ENCODE measurements at regions of chr16 and their contacts with region 1.

Region 1: GRCh38 chr16:30747799-30748634 is at the start of gene PHKG2:
- DNase-seq: peak; percentile 99
- ATAC-seq: peak; percentile 97
- H3K4me3 ChIP-seq: peak within 1 kb of the TSS; percentile 73 to 89 (median 82)
- H3K27ac ChIP-seq: peak within 1 kb of the TSS; percentile 77
- H3K4me1 ChIP-seq: peaks cover 51% of the 10 kb centered on the region
- H3K27me3 ChIP-seq: no peaks in the 10 kb centered on the region
- CTCF ChIP-seq: no peak
- EP300 ChIP-seq: peak; percentile 28 to 35; a peak in 3 of 4 replicates
- POLR2A ChIP-seq: peak; percentile 92 to 96
- RAD21 ChIP-seq: peak; percentile 22; the same call in 1 of the 2 replicates
- total RNA-seq, gene PHKG2: 33.9 and 37.4 TPM in 2 replicates

Region 2: GRCh38 chr16:30065143-30065850 is 682.7 kb before region 1 on chr16 and contains the start of gene ALDOA:
- CTCF ChIA-PET with region 1: no interaction called
- POLR2A ChIA-PET with region 1: no interaction called
- in situ Hi-C with region 1: no loop called
- intact Hi-C with region 1: loop called (anchors 5 kb)
- DNase-seq: peak; percentile 96
- ATAC-seq: peak; percentile 89
- H3K4me3 ChIP-seq: peak within 1 kb of the TSS; percentile 92 to 100 (median 95)
- H3K27ac ChIP-seq: peak within 1 kb of the TSS; percentile 95
- H3K4me1 ChIP-seq: peaks cover 46% of the 10 kb centered on the region
- H3K27me3 ChIP-seq: peaks cover 0 to 2% of the 10 kb centered on the region in 2 experiments; a peak in 1 of 5 replicates
- CTCF ChIP-seq: peak; percentile 19
- EP300 ChIP-seq: peak; percentile 3 to 87; a peak in 3 of 4 replicates
- POLR2A ChIP-seq: peak in 1 of 2 experiments; percentile 96; a peak in 2 of 4 replicates
- RAD21 ChIP-seq: peak; percentile 62; the same call in 1 of the 2 replicates
- total RNA-seq, gene ALDOA: 925 and 999 TPM in 2 replicates

Region 3: GRCh38 chr16:30698139-30698815 is 49.7 kb before region 1 on chr16:
- CTCF ChIA-PET with region 1: no interaction called
- POLR2A ChIA-PET with region 1: interaction called, 10 read pairs
- in situ Hi-C with region 1: no loop called
- intact Hi-C with region 1: loop called (anchors 5 kb)
- DNase-seq: peak; percentile 97
- ATAC-seq: peak; percentile 77
- H3K4me3 ChIP-seq: peak overlapping the region; percentile 75 to 96 (median 93)
- H3K27ac ChIP-seq: peak overlapping the region; percentile 99
- H3K4me1 ChIP-seq: peaks cover 33% of the 10 kb centered on the region
- H3K27me3 ChIP-seq: no peaks in the 10 kb centered on the region
- CTCF ChIP-seq: peak; percentile 48
- EP300 ChIP-seq: 0 out of 4 replicates have a peak, but pooled peaks have one; percentile 20 to 32
- POLR2A ChIP-seq: peak; percentile 94 to 97
- RAD21 ChIP-seq: peak; percentile 74

Region 4: DNA sequence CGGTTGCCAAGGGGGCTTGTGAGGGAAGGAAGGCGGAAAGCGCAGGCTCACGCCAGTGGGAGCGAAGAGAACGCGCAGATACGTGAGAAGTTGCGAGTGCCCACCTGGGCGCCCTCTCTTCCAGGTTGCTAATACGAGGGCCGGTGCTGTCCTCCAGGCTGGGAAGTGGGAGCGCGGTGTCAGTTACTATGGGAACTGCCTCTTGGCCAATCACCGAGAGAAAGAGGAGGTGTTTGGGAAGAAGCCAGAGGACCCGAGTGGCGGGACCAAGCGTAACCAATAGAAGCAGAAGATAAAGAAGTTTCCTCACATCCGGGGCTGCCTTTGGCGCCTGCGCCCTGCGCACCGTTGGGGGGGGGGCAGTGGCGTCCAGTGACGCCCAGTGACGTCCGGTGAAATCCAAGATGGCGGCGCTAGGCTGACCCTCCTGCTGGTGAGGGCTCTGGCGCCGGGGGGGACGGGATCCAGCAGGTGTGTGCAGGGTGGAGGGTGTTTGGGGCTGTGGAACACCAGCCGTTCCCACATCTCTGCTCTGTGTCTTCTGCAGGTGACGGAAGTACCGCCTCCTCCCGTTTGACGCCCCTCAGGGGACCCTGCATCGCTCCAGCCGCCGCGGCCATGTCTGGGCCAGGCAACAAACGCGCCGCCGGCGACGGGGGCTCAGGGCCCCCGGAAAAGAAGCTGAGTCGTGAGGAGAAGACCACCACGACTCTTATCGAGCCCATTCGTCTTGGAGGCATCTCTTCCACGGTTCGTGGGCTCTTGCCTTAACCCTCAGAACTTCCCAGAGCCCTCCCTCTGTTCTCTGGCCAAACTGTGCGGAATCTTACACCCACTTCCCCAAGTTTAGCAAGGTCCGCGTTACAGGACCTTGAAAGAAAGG is 14.2 kb after region 1 on chr16 and contains the starts of genes CFAP119 and RNF40:
- CTCF ChIA-PET with region 1: no interaction called
- POLR2A ChIA-PET with region 1: interaction called, 15 read pairs
- in situ Hi-C with region 1: no loop called
- intact Hi-C with region 1: loop called (anchors 1 kb)
- DNase-seq: peak; percentile 99
- ATAC-seq: peak; percentile 93
- H3K4me3 ChIP-seq: peak within 1 kb of the TSS; percentile 80 to 91 (median 86)
- H3K27ac ChIP-seq: peak within 1 kb of the TSS; percentile 66
- H3K4me1 ChIP-seq: peaks cover 29% of the 10 kb centered on the region
- H3K27me3 ChIP-seq: no peaks in the 10 kb centered on the region; a peak in 1 of 5 replicates
- CTCF ChIP-seq: no peak
- EP300 ChIP-seq: no peak; a peak in 1 of 4 replicates
- POLR2A ChIP-seq: peak; percentile 76 to 88
- RAD21 ChIP-seq: peak; percentile 24; the same call in 1 of the 2 replicates
- total RNA-seq, gene CFAP119: 1.2 and 6.4 TPM in 2 replicates
- total RNA-seq, gene RNF40: 85.6 and 102 TPM in 2 replicates

Region 5: DNA sequence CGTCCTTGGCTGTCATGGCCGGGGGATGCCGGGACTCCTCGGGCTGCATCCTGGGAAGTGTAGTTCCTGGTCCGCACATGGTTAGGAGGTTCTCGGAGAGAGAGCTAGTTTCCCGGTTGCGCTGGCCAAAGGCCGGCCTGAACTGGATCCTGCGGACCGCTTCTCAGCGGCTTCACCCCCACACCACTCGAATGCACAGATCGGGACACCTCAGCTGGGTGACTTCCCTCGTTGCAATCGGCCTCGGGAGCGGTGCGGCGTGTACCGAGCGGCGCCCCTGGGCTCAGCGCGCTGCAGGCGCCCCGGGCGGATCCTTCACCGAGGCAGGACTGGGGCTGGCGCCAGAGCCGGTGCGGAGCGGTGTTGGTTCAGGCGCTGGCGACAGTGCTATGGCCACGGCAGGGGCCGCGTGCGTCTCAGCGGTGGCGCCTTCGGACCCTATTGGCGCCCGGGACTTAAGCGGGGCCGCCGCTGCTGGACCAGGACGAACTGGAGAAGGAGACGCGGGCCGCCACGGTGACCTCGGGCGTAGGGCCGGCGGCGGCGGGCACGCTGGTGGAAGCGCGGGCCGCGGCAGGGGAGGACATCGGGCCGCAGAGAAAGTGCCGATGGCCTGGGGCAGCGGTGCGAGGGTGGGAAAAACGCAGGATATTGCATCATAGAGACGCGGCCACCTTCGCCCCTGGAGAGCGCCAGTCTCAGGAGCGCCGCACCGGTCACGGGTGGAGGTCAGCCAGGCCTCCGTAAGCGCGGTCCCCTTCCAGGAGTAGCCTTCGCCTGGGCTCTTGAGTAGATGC is 27.6 kb after region 1 on chr16:
- CTCF ChIA-PET with region 1: no interaction called
- POLR2A ChIA-PET with region 1: interaction called, 24 read pairs
- in situ Hi-C with region 1: no loop called
- intact Hi-C with region 1: loop called (anchors 1 kb)
- DNase-seq: peak; percentile 83
- ATAC-seq: peak; percentile 84
- H3K4me3 ChIP-seq: peak overlapping the region; percentile 63 to 88 (median 75)
- H3K27ac ChIP-seq: peak overlapping the region; percentile 89
- H3K4me1 ChIP-seq: peaks cover 36% of the 10 kb centered on the region
- H3K27me3 ChIP-seq: no peaks in the 10 kb centered on the region; a peak in 1 of 5 replicates
- CTCF ChIP-seq: peak; percentile 34
- EP300 ChIP-seq: peak; percentile 6 to 39; a peak in 1 of 4 replicates
- POLR2A ChIP-seq: peak; percentile 83 to 86
- RAD21 ChIP-seq: peak; percentile 44

Region 6: DNA sequence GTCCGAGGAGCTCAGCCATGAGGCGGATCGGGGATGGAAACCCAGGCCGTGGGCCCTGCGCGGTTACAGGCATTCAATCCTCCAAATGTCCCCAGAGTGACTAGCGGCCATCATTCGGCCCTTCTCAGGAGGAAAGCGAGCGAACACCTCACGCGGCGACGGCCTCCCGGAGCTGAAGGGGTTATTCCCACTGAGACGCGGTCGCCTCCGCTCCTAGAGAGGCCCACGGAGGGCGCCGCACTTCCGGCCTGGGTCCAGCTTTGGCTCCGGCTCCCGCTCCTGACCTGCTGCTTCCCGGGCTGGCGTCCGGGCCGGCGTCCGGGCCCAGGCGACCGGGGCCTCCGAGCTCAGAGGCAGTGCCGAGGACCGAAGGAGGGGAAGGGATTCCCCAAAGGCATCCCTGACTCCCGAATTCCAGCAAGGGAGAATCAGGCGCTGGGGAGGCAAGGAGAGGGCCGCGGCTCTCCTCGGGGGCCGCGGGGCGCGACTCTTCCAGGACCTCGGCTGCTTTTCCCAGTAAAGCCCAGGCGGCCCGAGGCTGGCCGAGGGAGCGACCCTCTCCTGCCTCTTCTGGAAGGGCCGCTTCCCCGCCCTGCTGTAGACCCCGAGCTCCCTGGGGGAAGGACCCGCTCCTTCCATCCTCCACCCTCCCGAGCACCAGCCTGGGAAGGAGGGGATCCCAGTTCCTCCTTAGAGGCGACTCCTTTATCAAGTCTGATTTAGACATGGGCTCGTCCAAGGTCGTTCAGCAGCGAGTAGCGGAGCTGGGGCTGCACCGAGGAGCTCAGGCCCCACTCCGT is 57.6 kb after region 1 on chr16:
- CTCF ChIA-PET with region 1: no interaction called
- POLR2A ChIA-PET with region 1: interaction called, 35 read pairs
- in situ Hi-C with region 1: no loop called
- intact Hi-C with region 1: loop called (anchors 10 kb)
- DNase-seq: peak; percentile 78
- ATAC-seq: peak; percentile 88
- H3K4me3 ChIP-seq: peak overlapping the region; percentile 74 to 96 (median 89)
- H3K27ac ChIP-seq: peak overlapping the region; percentile 92
- H3K4me1 ChIP-seq: peaks cover 54% of the 10 kb centered on the region
- H3K27me3 ChIP-seq: no peaks in the 10 kb centered on the region; a peak in 1 of 5 replicates
- CTCF ChIP-seq: peak; percentile 65
- EP300 ChIP-seq: peak; percentile 68 to 78; a peak in 3 of 4 replicates
- POLR2A ChIP-seq: peak; percentile 91 to 93
- RAD21 ChIP-seq: peak; percentile 83; the same call in 1 of the 2 replicates

Region 7: DNA sequence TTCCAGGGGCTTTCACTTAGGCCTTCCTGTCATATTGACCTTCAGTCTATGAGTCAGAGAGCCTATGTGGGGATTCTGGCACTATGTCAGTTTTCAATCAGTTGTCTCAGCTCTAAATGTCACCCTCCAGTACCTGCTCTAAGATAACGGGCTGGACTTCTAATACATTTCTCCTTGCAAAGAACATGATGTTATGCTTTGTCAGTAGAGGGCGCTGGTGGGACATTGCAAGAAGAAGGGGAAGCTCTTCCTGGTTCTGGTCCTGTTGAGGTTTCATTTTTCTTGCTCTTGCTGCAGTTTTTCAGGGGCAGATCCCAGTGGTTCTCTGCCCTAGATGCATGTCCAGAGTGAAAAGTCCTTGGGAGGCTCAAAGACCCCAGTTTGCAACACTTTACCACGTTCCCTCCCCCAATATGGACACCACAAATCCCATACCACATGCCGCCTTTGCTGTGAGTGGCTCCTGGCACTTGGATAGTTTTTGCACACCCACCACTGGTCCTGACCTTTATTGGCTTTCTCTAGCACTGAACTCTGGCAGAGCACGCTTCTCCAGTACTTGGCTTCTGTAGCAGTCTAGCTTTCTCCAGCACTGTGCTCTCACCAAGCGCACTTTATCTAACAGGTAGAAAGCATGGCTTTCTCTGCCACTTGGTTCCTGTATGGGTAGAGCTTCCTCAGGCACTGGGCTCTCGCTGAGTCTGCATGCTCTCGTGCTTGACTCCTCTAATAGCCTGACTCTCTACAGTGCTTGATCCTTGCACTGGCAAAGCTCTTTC is 96.8 kb after region 1 on chr16:
- CTCF ChIA-PET with region 1: no interaction called
- POLR2A ChIA-PET with region 1: interaction called, 11 read pairs
- in situ Hi-C with region 1: no loop called
- intact Hi-C with region 1: no loop called
- DNase-seq: peak; percentile 97
- ATAC-seq: peak; percentile 86
- H3K4me3 ChIP-seq: peak overlapping the region; percentile 32 to 66 (median 45)
- H3K27ac ChIP-seq: peak overlapping the region; percentile 64
- H3K4me1 ChIP-seq: peaks cover 33% of the 10 kb centered on the region
- H3K27me3 ChIP-seq: no peaks in the 10 kb centered on the region
- CTCF ChIP-seq: peak; percentile 96
- EP300 ChIP-seq: no peak; a peak in 1 of 4 replicates
- POLR2A ChIP-seq: peak; percentile 23 to 44; a peak in 3 of 4 replicates
- RAD21 ChIP-seq: peak; percentile 89

Region 8: DNA sequence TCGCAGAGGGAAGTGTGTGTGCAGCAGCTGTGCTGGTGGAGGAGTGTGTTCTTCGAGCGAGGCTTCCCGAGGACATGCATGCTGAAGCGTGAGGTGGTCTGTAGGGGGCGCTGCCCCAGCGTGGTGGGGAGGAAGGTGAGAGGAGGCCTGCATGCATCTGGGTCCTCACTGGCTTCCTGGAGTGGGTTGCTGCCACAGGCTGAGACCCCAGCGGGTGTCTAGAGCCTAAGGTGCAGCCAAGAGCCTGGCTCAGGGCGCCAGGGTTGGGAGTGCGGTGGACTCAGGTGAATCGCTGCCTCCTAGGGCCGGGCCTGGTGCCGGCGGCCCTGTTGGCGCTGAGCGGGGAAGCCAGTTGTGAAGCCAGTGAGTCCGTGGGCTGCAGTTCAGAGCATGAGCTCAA is 229.5 kb after region 1 on chr16:
- CTCF ChIA-PET with region 1: no interaction called
- POLR2A ChIA-PET with region 1: no interaction called
- in situ Hi-C with region 1: no loop called
- intact Hi-C with region 1: no loop called
- DNase-seq: no peak
- ATAC-seq: peak; percentile 37
- H3K4me3 ChIP-seq: no peak overlapping the region
- H3K27ac ChIP-seq: no peak overlapping the region
- H3K4me1 ChIP-seq: no peaks in the 10 kb centered on the region
- H3K27me3 ChIP-seq: no peaks in the 10 kb centered on the region
- CTCF ChIP-seq: peak; percentile 56
- EP300 ChIP-seq: no peak
- POLR2A ChIP-seq: no peak
- RAD21 ChIP-seq: no peak